ENCODE measurements at regions of chr1 and their contacts with region 1.

Region 1: DNA sequence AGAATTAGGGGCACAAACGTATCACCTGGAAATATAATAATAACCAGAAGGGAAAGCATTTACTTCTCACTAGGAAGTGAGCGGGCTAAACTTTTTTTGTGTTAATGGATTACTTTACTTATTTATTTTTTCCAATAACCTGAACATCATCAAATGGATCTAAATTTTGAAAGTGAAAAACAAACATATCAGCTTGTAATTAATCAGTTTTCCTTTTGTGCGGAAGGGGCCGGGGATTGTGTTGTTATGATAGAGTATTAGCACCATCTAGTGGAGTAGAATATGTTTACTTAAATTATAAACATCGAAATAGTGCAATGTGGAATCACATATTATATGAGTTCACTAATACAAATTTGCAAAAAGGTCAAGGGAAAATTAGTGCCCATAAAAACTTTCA is 9.0 kb downstream of the CFH start:
- DNase-seq: peak; percentile 8
- H3K4me3 ChIP-seq: no peak overlapping the region
- H3K27ac ChIP-seq: no peak overlapping the region
- H3K4me1 ChIP-seq: no peaks in the 10 kb centered on the region
- H3K27me3 ChIP-seq: no peaks in the 10 kb centered on the region
- CTCF ChIP-seq: peak; percentile 27 to 45

Region 2: GRCh38 chr1:196148367-196148970 is 512.4 kb before region 1 on chr1:
- CTCF ChIA-PET with region 1: no interaction called
- dilution Hi-C with region 1: no loop called
- in situ Hi-C with region 1: loop called in 1 of 2 experiments (anchors 10 kb)
- intact Hi-C with region 1: loop called (anchors 2 kb)
- DNase-seq: peak; percentile 23
- H3K4me3 ChIP-seq: no peak overlapping the region
- H3K27ac ChIP-seq: no peak overlapping the region
- H3K4me1 ChIP-seq: peaks cover 8% of the 10 kb centered on the region
- H3K27me3 ChIP-seq: no peaks in the 10 kb centered on the region
- CTCF ChIP-seq: peak; percentile 44 to 51

Region 3: GRCh38 chr1:196180847-196181593 is 479.8 kb before region 1 on chr1:
- CTCF ChIA-PET with region 1: no interaction called
- dilution Hi-C with region 1: loop called (anchors 25 kb)
- in situ Hi-C with region 1: no loop called
- intact Hi-C with region 1: no loop called
- DNase-seq: peak; percentile 96
- H3K4me3 ChIP-seq: no peak overlapping the region
- H3K27ac ChIP-seq: no peak overlapping the region
- H3K4me1 ChIP-seq: peaks cover 17% of the 10 kb centered on the region
- H3K27me3 ChIP-seq: no peaks in the 10 kb centered on the region
- CTCF ChIP-seq: no peak

Region 4: DNA sequence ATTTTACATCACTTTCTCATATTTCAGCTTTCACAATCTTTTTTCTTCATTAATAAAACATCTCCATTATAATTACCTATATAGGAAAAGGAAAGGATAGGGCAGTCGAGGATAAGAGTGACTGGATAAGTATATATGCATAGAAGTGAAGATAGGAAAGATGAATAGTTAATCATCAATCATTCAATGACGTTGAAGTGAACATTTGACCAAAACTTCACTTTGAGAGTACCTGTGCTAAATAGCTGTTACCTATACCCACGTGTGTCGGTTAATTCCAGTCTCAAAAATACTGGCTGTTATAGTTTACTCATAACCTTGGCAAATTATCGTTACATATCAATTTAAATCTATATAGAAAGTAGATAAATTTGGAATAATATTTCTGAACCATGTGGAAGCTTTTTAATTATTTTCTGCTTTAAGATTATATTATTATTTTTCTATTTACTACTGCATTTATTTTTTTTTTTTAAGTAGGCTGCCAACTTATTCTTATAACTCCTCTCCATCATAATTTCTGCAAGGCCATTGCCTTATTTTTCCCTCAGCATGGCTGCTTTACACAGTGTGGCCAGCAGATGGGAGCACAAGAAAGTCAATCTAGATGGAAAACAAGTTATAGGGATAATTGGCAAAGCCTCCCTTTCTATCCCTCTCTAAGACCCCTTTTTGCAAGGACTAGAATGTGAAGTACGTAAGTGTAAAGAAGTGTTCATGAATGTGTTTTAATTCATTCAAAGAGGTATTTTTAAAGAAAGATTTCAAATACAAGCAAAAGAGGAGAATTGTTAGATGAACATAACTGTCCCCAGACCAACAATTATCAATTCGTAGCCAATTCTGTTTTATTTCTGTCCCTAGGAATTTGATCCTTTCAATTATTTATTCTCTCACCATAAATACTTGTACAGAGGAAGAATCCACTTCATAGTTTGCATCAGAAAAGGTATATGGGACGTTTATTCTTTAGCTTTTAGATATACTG is 343.0 kb before region 1 on chr1:
- CTCF ChIA-PET with region 1: interaction called, 4 read pairs
- dilution Hi-C with region 1: no loop called
- in situ Hi-C with region 1: no loop called
- intact Hi-C with region 1: loop called (anchors 1 kb)
- DNase-seq: peak; percentile 11
- H3K4me3 ChIP-seq: no peak overlapping the region
- H3K27ac ChIP-seq: no peak overlapping the region
- H3K4me1 ChIP-seq: no peaks in the 10 kb centered on the region
- H3K27me3 ChIP-seq: no peaks in the 10 kb centered on the region
- CTCF ChIP-seq: peak; percentile 53 to 73

Region 5: DNA sequence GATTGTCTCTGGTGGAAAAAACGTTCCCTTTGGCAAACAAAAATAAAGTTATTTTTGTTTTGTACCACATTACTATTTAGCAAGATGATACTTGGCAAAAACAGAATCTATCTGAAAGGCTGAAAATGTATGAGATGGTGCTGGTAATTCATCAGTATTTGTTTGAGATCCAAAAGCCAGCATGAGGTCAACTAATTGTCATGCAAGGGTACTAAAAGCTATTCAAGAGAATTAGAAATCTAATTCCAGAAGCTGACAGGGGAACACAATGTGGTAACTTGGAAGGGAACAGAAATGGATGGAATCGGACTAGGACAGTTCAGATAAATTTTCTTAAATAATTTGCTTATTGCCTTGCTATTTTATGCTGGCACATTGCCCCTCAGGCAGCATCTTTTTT is 316.4 kb before region 1 on chr1:
- CTCF ChIA-PET with region 1: no interaction called
- dilution Hi-C with region 1: no loop called
- in situ Hi-C with region 1: loop called (anchors 25 kb)
- intact Hi-C with region 1: no loop called
- DNase-seq: no peak
- H3K4me3 ChIP-seq: no peak overlapping the region
- H3K27ac ChIP-seq: no peak overlapping the region
- H3K4me1 ChIP-seq: no peaks in the 10 kb centered on the region
- H3K27me3 ChIP-seq: peaks cover under 1% of the 10 kb centered on the region
- CTCF ChIP-seq: no peak

Region 6: DNA sequence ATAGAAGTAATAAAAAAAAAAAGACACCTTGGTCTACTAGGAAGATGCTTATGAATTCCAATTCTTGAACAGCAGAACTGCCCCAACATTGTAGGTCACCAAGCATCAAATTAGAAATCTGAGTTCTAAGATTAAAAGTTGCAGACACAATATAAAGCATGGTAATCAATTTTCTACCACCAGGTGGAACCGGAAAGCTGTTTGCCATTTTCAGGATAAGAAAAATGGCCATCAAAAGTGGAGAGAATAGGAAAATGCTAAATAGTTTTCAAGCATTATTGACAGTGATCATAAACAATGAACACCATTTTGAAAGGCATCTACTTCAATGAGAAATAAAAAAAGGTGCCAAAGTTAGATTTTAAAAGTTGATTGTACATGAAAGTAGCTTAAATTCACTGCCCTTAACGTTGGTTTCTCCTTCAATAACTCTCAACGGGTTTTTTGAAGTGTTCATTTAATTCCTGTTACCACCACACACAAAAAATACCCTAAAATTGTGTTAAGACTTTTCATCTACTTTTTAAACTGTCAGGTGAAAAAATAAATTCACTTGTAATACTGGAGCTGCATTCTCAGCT is 305.6 kb before region 1 on chr1:
- CTCF ChIA-PET with region 1: interaction called, 3 read pairs
- dilution Hi-C with region 1: no loop called
- in situ Hi-C with region 1: no loop called
- intact Hi-C with region 1: loop called (anchors 1 kb)
- DNase-seq: no peak
- H3K4me3 ChIP-seq: no peak overlapping the region
- H3K27ac ChIP-seq: no peak overlapping the region
- H3K4me1 ChIP-seq: no peaks in the 10 kb centered on the region
- H3K27me3 ChIP-seq: peaks cover 4% of the 10 kb centered on the region
- CTCF ChIP-seq: peak; percentile 32 to 54